ENCODE measurements at regions of chr3 and their contacts with region 1.

Region 1: GRCh38 chr3:72996473-72997333 is at the start of gene PPP4R2:
- DNase-seq: peak; percentile 94
- H3K4me3 Mint-ChIP-seq: peak within 1 kb of the TSS; percentile 92
- H3K27ac Mint-ChIP-seq: peak within 1 kb of the TSS; percentile 90
- H3K4me1 Mint-ChIP-seq: peaks cover 39% of the 10 kb centered on the region
- H3K27me3 Mint-ChIP-seq: no peaks in the 10 kb centered on the region
- total RNA-seq, gene PPP4R2: 107 to 108 TPM

Region 2: DNA sequence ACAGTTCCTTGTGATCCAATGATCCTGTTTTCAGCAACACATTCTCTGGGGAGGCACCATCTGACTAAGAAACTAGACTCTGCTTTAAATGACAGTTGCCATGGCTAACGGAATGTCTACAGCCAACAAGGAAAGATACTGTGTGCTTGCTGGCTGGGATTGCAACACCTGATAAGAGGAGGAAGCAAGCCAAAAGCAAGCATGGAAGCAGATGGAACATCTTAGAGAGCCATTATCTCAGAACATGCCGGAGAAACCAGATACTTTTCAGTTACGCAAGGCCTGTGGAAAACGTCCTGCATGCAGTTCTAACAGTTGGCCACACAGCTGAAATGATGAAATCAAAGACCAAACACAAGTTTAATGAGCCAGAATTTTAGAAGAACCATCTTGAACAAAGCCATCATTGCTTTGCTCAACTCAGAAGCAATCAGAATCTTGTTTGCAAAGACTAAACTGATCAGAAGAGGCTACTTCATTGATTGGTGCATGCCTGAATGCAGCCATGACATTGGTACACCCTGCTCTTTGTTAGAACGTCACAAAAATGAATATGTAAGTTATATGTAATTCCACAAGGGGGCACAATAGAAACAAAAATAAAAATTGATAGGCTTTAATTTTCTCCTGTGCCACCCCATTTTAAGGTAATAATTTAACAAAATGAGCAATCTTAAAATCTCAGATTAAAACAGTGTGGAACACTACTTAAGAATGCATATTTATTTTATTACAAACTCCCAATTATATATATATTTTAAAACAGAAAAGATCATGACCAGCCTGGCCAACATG is 58.0 kb before region 1 on chr3:
- CTCF ChIA-PET with region 1: interaction called, 6 read pairs
- POLR2A ChIA-PET with region 1: no interaction called
- intact Hi-C with region 1: loop called (anchors 1 kb)
- DNase-seq: peak; percentile 34
- H3K4me3 Mint-ChIP-seq: no peak overlapping the region
- H3K27ac Mint-ChIP-seq: no peak overlapping the region
- H3K4me1 Mint-ChIP-seq: peaks cover 3% of the 10 kb centered on the region
- H3K27me3 Mint-ChIP-seq: peaks cover 2% of the 10 kb centered on the region

Region 3: DNA sequence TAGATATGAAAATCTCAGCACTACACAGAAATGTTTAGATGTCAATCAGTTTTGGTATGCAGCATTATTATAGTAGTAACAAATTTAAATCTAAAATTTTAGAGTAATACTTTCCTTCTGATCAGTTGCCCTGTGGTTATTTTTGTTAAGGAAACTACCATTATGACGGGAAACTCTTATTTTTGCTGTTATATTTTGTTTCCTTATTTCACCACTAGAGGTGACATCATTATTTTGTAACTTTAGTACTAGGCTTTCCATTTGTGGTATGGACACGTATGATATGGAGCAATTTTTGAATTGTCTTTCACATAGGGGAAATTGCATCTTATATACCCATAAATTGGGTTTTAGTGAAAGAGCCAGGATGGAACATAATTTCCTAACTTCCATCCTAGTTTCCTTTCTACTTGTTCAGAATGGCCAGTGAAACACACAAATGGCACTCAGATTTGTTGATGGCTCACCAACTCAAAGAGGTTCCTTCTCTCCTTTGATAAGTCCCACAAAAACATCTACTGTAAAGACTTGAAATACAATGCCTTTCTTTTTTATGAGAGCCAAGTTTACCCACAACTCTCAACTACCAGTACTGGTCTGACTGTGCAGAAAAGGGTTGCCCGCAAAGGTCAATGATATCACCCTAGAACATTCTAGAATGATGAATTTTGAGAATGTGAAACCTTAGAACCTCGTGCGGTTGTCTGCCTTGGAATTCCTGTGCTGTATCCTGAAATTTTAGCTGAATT is 19.5 kb before region 1 on chr3:
- CTCF ChIA-PET with region 1: no interaction called
- POLR2A ChIA-PET with region 1: no interaction called
- intact Hi-C with region 1: loop called (anchors 1 kb)
- DNase-seq: peak; percentile 57
- H3K4me3 Mint-ChIP-seq: peak overlapping the region; percentile 20
- H3K27ac Mint-ChIP-seq: peak overlapping the region; percentile 83
- H3K4me1 Mint-ChIP-seq: peaks cover 28% of the 10 kb centered on the region
- H3K27me3 Mint-ChIP-seq: peaks cover 2% of the 10 kb centered on the region

Region 4: DNA sequence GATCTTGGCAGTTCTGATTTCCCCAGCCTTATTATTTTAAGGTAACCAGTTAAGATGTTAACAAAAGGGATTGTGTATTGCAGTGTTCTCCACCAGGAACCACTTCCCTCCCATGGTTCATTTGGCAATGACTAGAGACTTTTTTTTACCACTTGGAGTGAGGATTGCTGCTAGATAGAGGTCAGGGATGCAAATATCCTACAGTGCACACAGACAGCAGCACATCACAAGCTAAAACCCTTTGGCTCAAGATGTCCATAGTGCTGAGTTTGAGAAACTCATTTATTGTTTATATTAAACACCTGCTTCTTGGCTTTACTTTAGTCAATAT is 40.6 kb after region 1 on chr3:
- CTCF ChIA-PET with region 1: interaction called, 3 read pairs
- POLR2A ChIA-PET with region 1: no interaction called
- intact Hi-C with region 1: loop called (anchors 2 kb)
- DNase-seq: no peak
- H3K4me3 Mint-ChIP-seq: no peak overlapping the region
- H3K27ac Mint-ChIP-seq: peak overlapping the region; percentile 62
- H3K4me1 Mint-ChIP-seq: peaks cover 91% of the 10 kb centered on the region
- H3K27me3 Mint-ChIP-seq: no peaks in the 10 kb centered on the region

Region 5: DNA sequence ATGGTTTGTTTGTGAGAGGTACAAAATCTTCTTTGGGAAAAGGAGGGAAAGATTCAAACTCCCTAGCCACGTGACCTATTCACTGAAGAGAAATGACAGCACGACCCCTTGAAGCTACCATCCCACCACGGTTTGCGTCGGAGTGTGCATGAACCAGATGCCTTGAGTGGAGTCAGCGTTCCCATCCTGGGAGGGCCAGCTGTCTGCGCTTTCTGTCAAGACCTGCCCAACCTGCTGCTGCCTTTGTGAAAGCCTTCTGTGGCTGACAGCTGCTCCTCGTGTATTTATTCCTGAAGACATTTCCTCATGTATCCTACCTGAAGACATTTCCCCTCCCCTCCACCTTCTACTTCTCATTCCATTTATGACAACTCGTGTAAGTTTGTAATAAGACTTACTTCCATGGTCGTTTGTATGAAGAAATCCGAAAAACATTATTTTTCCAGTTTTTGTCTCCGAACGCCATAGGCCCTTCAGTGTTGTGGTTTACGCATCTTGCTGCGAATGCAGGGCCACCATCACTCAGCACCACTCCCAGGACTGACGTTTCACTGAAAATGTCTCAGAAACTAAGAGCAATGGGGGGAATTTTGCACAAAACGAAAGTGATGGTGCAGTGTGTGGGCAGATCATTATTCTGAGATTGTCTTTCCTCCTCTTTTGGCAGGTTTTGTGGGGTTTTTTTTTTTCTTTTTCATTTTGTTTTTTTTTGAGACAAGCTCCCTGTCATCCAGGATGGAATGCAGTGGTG is 83.7 kb after region 1 on chr3:
- CTCF ChIA-PET with region 1: no interaction called
- POLR2A ChIA-PET with region 1: no interaction called
- intact Hi-C with region 1: loop called (anchors 2 kb)
- DNase-seq: peak; percentile 67
- H3K4me3 Mint-ChIP-seq: peak overlapping the region; percentile 18
- H3K27ac Mint-ChIP-seq: no peak overlapping the region
- H3K4me1 Mint-ChIP-seq: peaks cover 11% of the 10 kb centered on the region
- H3K27me3 Mint-ChIP-seq: no peaks in the 10 kb centered on the region